Calu3 (cell line): ENCODE measurements at regions of chr1 and their contacts with region 1.

Region 1: GRCh38 chr1:46132529-46133180 is at the start of gene PIK3R3:
- DNase-seq: peak; percentile 98
- H3K4me3 Mint-ChIP-seq: peak within 1 kb of the TSS; percentile 86
- H3K27ac Mint-ChIP-seq: peak within 1 kb of the TSS; percentile 99
- H3K4me1 Mint-ChIP-seq: peaks cover 59% of the 10 kb centered on the region
- H3K27me3 Mint-ChIP-seq: no peaks in the 10 kb centered on the region
- CTCF ChIP-seq: no peak
- total RNA-seq, gene PIK3R3: 17.4 and 21.4 TPM in 2 replicates

Region 2: GRCh38 chr1:45221716-45222115 is 910.9 kb before region 1 on chr1:
- CTCF ChIA-PET with region 1: no interaction called
- intact Hi-C with region 1: no loop called
- DNase-seq: no peak
- H3K4me3 Mint-ChIP-seq: no peak overlapping the region
- H3K27ac Mint-ChIP-seq: no peak overlapping the region
- H3K4me1 Mint-ChIP-seq: no peaks in the 10 kb centered on the region
- H3K27me3 Mint-ChIP-seq: peaks cover 28% of the 10 kb centered on the region
- CTCF ChIP-seq: no peak

Region 3: DNA sequence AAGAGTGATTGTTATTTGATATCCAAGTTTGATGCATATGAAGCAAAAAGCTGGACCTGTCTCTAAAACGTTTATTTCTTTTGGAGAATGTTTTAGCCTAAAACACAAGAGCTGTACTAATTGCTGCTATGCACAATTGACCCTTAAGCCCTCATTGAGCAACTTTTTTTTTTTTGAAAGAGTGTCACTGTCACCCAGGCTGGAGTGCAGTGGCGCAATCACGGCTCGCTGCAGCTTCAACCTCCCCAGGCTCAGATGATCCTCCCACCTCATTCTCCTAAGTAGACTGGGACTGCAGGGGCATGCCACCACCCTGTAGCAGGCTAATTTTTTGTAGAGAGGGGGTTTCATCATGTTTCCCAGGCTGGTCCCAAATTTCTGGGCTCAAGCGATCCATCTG is 129.3 kb before region 1 on chr1:
- CTCF ChIA-PET with region 1: no interaction called
- intact Hi-C with region 1: no loop called
- DNase-seq: no peak
- H3K4me3 Mint-ChIP-seq: no peak overlapping the region
- H3K27ac Mint-ChIP-seq: no peak overlapping the region
- H3K4me1 Mint-ChIP-seq: no peaks in the 10 kb centered on the region
- H3K27me3 Mint-ChIP-seq: no peaks in the 10 kb centered on the region
- CTCF ChIP-seq: no peak

Region 4: DNA sequence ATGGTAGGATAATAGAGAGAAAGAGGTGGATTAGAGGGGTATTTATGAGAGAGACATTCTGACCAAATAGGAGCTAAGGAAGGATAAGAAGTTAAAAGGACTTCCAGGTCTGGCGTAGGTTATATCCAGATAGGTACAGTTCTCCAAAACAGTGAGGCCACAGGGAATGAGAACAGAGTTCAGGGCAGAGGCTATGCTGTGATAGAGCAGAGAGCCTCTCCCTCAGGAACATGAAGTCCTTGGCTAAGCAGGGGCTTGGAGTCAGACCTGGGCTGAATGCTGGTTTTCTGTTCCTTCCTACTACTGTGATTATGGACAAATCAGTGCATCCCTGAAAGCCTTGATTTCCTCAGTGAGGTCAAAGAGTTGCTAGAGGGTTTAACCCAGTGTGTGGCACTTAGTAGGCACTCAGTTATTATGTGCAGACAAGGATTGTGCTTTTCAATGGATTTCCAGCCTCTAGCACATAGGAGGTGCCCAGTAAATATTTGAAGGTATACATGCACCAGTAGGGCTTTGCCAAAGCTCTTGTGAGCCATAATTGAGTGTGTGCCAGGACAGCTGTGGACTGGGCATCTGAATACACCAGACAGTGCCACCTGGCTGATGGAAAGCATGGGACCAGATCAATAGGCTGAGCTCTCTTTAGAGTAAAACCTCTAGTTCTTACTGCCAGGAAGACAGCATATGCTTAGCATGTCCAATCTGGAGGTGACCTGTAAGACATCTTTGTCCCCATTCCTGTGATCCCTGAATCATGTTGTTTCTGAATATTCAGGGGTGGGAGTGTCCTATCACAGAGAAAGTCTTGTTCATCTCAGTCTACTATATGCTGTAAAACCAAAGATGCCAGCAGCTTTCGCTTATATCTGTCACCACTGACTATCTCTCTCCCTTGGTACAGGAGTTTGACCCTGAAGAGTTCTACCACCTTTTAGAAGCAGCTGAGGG is 111.3 kb before region 1 on chr1:
- CTCF ChIA-PET with region 1: no interaction called
- intact Hi-C with region 1: no loop called
- DNase-seq: no peak
- H3K4me3 Mint-ChIP-seq: no peak overlapping the region
- H3K27ac Mint-ChIP-seq: no peak overlapping the region
- H3K4me1 Mint-ChIP-seq: no peaks in the 10 kb centered on the region
- H3K27me3 Mint-ChIP-seq: no peaks in the 10 kb centered on the region
- CTCF ChIP-seq: no peak

Region 5: GRCh38 chr1:46036894-46037839 is 95.5 kb before region 1 on chr1:
- CTCF ChIA-PET with region 1: no interaction called
- intact Hi-C with region 1: loop called (anchors 5 kb)
- DNase-seq: peak; percentile 90
- H3K4me3 Mint-ChIP-seq: no peak overlapping the region
- H3K27ac Mint-ChIP-seq: no peak overlapping the region
- H3K4me1 Mint-ChIP-seq: no peaks in the 10 kb centered on the region
- H3K27me3 Mint-ChIP-seq: no peaks in the 10 kb centered on the region
- CTCF ChIP-seq: peak; percentile 95

Region 6: DNA sequence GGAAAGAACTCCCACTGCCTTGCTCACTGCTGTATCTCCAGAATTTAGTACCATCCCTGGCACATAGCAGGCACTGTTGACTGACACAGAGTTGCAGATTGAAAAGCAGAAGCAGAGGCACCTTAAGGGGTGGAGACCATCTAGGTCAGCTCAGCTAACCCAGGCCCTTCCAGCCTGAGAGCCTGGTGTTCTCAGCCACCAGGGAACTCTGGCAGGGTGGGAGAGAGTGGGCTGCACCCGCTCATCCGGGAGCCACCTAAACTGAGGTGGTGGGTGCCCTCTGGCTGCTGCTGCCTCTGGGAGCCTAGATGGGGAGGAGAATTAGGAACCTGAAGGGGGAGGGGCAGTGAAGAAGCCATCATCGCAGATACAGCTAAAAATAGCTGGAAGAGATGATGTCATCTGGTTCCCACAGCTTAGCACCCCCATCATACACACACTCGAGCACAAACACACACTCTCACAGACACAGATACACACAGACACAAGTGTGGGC is 40.8 kb after region 1 on chr1:
- CTCF ChIA-PET with region 1: interaction called, 3 read pairs
- intact Hi-C with region 1: loop called (anchors 2 kb)
- DNase-seq: no peak
- H3K4me3 Mint-ChIP-seq: no peak overlapping the region
- H3K27ac Mint-ChIP-seq: no peak overlapping the region
- H3K4me1 Mint-ChIP-seq: no peaks in the 10 kb centered on the region
- H3K27me3 Mint-ChIP-seq: peaks cover under 1% of the 10 kb centered on the region
- CTCF ChIP-seq: no peak